ENCODE measurements at regions of chr7 and their contacts with region 1.

Region 1: DNA sequence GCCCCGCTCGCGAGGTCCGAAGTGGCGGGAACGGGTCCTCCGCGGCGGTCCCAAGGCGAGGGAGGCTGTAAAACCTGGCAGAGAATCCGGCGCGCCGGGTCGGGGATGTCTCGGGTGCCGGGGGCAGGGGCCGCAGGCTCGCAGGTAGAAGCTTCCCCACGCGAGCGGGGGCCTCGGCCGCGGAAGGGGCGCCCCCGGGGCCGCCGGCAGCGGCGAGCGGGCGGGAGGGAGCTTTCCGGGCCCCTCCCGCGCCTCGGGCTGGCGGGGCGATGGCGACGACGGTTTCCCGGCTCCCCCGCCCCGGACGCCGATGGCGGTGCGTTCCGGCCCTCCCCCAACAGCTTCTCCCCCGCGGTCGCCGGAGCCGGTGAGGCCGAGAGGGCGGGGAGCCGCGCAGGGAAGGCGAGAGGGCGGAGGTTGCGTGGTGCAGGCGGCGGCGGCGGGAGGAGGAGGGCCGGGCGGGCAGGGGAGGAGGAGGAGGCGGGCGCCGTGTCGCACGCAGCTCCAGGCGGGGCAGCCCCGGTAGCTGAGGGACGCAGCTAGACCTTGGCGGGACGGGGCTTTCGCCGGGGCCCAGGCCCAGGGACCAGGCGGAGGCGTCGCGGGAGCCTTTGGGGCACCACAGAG is at the start of gene CUL1:
- DNase-seq: peak; percentile 86 to 91 (median 89)
- H3K4me3 ChIP-seq: peak within 1 kb of the TSS; percentile 50 to 94 (median 86)
- H3K27ac ChIP-seq: peak within 1 kb of the TSS; percentile 85 to 99 (median 98)
- H3K4me1 ChIP-seq: peaks cover 27 to 38% of the 10 kb centered on the region in 2 donors
- H3K27me3 ChIP-seq: no peaks in the 10 kb centered on the region
- CTCF ChIP-seq: no peak
- POLR2A ChIP-seq: peak; percentile 74 to 81
- total RNA-seq, gene CUL1: 27.8 to 69.0 (median 39.1) TPM

Region 2: GRCh38 chr7:148662646-148663045 is 35.9 kb before region 1 on chr7:
- intact Hi-C with region 1: no loop called
- DNase-seq: peak in 1 of 7 donors; percentile 4
- H3K4me3 ChIP-seq: no peak overlapping the region
- H3K27ac ChIP-seq: no peak overlapping the region
- H3K4me1 ChIP-seq: no peaks in the 10 kb centered on the region
- H3K27me3 ChIP-seq: no peaks in the 10 kb centered on the region
- CTCF ChIP-seq: no peak
- POLR2A ChIP-seq: no peak

Region 3: GRCh38 chr7:148954766-148955165 is 256.3 kb after region 1 on chr7:
- intact Hi-C with region 1: loop called in 1 of 2 experiments (anchors 10 kb)
- DNase-seq: no peak
- H3K4me3 ChIP-seq: no peak overlapping the region
- H3K27ac ChIP-seq: no peak overlapping the region
- H3K4me1 ChIP-seq: no peaks in the 10 kb centered on the region
- H3K27me3 ChIP-seq: no peaks in the 10 kb centered on the region
- CTCF ChIP-seq: no peak
- POLR2A ChIP-seq: no peak

Region 4: GRCh38 chr7:149790146-149790548 is 1091.6 kb after region 1 on chr7:
- intact Hi-C with region 1: no loop called
- DNase-seq: peak in 5 of 7 donors; percentile 31 to 60 (median 53)
- H3K4me3 ChIP-seq: no peak overlapping the region
- H3K27ac ChIP-seq: no peak overlapping the region
- H3K4me1 ChIP-seq: peaks cover 0 to 5% of the 10 kb centered on the region in 2 donors
- H3K27me3 ChIP-seq: peaks cover 29% of the 10 kb centered on the region
- CTCF ChIP-seq: peak in 4 of 6 experiments; percentile 21 to 60 (median 52)
- POLR2A ChIP-seq: no peak